ENCODE measurements at regions of chr18 and their contacts with region 1.

Region 1: GRCh38 chr18:62812235-62812634 is 96.9 kb downstream of the PHLPP1 start:
- DNase-seq: peak; percentile 31 to 89
- ATAC-seq: peak; percentile 93 to 97
- H3K4me3 ChIP-seq: peak overlapping the region; percentile 0
- H3K27ac ChIP-seq: peak overlapping the region; percentile 89 to 90
- H3K4me1 ChIP-seq: peaks cover 65% of the 10 kb centered on the region
- CTCF ChIP-seq: no peak
- EP300 ChIP-seq: peak; percentile 51 to 75; a peak in 4 of 5 replicates
- POLR2A ChIP-seq: no peak
- RAD21 ChIP-seq: peak; percentile 3 to 31; a peak in 2 of 5 replicates

Region 2: DNA sequence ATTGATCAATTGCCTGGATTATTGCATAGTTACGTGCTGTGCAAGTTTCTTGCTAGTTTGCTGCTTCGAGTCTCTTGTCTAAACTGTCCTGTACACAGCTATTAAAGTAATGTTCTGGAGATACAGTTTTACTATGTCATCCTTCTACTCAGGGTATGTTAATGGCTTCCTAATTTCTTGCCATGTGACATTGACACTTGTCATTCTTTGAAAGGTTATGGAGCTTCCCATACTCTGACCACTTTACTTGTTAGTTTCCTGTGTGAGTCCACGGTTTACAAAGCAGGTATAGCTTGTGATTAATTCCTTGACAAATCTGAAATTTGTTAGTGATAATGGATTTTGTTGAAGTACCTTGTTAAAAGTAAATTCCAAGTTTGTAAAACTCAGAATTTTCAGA is 16.4 kb before region 1 on chr18:
- CTCF ChIA-PET with region 1: no interaction called
- POLR2A ChIA-PET with region 1: interaction called, 13 read pairs
- DNase-seq: no peak
- ATAC-seq: no peak
- H3K4me3 ChIP-seq: no peak overlapping the region
- H3K27ac ChIP-seq: no peak overlapping the region
- H3K4me1 ChIP-seq: peaks cover 31% of the 10 kb centered on the region; the same call in 2 of the 3 replicates
- CTCF ChIP-seq: no peak
- EP300 ChIP-seq: no peak
- POLR2A ChIP-seq: no peak
- RAD21 ChIP-seq: no peak

Measured in A549 (cell line).